Head of caudate nucleus (tissue), 42 donors: ENCODE measurements at regions of chr12 and their contacts with region 1.

Region 1: GRCh38 chr12:21527451-21528180 is 1.5 kb downstream of the SPX start:
- DNase-seq: peak; percentile 21 to 87 (median 70)

Region 2: GRCh38 chr12:21330682-21331253 is 196.8 kb before region 1 on chr12:
- intact Hi-C with region 1: no loop called
- DNase-seq: no peak

Region 3: DNA sequence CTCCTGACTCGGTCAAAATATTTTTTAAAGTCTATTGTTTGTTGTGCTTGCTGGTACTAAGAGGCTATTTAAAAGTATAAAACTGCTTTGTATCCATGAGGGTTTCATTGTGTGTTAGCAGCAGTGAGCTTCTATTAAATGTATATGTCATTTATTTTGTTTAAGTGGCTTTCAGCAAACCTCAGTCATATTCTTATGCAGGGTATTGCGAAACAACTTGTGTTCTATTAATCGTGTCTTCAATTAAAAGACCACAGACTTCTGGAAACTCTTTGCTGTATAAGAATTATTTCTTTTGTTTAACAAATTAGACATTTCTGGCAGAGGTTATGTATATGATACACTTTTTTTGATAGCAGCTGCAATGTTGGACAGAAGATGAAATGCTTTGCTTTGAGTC is 148.4 kb before region 1 on chr12:
- intact Hi-C with region 1: no loop called
- DNase-seq: no peak

Region 4: DNA sequence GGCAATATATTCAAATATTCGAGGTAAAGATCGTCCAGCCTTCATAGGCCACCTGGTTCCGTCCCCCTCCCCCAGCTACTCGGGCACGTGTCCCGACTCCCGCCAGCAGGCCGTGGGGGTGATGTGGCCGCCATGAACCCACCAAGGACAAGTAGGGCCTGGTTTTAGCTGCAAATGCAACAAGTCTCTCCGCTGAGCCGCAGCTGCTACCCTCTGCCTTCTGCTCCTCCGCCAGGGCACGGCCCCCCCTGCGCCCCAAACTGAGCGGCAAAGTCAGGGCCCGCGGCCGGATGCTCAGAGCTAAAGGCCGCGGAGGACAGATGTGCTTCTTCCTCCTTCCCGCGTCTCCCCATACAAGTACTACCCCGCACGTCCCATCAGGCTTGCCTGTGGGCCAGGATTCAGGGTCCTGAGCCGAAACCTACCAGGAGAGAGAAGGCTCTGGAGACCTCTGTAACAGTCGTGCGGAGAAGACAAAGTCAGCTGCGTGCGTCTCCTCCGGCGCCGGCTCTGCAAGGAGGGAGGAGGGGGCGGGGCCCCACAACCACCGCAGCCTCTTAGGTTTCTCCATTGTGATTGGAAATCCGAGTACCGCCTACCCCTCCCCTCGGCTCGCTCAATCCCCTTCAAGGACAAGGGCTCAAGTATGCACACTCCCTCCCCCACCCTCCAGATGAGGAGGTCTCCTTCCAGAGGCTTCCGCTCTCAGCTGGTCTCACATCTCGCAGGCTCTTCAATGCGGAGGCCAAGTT is 129.9 kb after region 1 on chr12 and contains the start of gene LDHB:
- intact Hi-C with region 1: loop called (anchors 10 kb)
- DNase-seq: peak; percentile 85 to 98 (median 95)